Esophagus muscularis mucosa (tissue), 4 donors: ENCODE measurements at regions of chr20 and their contacts with region 1.

Region 1: DNA sequence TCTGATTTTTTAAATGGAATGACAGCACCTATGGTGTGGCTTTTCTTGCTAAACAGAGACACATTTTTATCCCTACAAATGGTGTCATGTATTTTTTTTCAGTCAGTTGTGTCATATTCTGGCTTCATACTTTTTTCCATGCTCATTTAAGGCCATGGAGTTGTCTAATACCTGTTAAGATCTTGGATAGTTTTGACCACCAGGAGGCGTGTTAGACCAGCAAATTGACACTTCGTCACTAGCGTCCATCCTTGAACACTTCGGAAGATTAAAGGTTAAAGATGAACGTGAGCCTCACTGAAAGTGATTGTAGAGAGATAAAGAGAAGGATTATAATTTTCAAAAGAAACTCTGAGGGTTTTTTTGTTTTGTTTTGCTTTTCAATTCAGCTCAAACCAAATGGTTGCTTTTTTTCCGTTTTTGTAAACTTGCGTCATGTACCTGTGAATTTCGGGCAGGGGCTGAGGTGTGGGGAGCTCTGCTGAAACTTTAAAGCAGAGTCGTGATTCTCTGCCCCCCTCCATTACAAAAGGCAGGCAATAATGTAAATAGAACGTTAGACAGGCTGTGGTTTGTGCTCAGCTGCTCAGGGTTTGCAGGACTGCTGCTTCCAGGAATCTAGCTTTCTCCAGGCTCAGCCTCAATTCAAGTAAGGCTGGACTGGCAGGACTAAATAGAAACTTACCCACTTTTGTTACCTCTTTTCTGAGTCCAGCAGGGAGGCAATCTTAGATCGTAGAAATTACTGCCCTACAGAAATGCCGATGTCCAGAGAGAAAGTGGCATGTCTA is 245.1 kb downstream of the FOXA2 start:
- DNase-seq: peak; percentile 39
- H3K4me3 ChIP-seq: no peak overlapping the region
- H3K27ac ChIP-seq: no peak overlapping the region
- H3K4me1 ChIP-seq: peaks cover 0 to 4% (median 0%) of the 10 kb centered on the region in 4 donors
- H3K27me3 ChIP-seq: peaks cover 0 to 38% (median 0%) of the 10 kb centered on the region in 4 donors
- CTCF ChIP-seq: peak; percentile 55 to 66 (median 66)
- EP300 ChIP-seq: no peak
- POLR2A ChIP-seq: no peak

Region 2: DNA sequence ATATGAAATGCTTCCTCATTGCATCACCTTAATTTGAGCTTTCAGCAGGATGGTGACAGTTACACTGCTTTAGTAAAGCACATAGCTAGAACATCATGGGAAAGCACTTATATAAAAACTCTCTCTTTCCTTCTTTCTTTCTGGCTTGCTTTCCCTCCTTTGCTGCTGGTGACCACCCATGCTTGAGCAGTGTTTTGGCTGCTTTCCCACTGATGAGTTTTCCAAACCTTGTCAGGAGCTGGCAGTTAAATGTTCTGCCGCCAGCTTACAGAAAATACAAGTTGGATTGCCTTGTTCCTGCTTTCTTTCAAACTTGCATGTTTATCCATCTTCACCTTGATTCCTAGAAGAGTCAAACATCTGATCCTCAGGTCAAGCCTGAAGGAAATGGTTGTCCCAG is 78.8 kb before region 1 on chr20:
- intact Hi-C with region 1: no loop called
- DNase-seq: no peak
- H3K4me3 ChIP-seq: no peak overlapping the region
- H3K27ac ChIP-seq: no peak overlapping the region
- H3K4me1 ChIP-seq: peaks cover 0 to 7% (median 3%) of the 10 kb centered on the region in 4 donors
- H3K27me3 ChIP-seq: no peaks in the 10 kb centered on the region
- CTCF ChIP-seq: no peak
- EP300 ChIP-seq: no peak
- POLR2A ChIP-seq: no peak

Region 3: DNA sequence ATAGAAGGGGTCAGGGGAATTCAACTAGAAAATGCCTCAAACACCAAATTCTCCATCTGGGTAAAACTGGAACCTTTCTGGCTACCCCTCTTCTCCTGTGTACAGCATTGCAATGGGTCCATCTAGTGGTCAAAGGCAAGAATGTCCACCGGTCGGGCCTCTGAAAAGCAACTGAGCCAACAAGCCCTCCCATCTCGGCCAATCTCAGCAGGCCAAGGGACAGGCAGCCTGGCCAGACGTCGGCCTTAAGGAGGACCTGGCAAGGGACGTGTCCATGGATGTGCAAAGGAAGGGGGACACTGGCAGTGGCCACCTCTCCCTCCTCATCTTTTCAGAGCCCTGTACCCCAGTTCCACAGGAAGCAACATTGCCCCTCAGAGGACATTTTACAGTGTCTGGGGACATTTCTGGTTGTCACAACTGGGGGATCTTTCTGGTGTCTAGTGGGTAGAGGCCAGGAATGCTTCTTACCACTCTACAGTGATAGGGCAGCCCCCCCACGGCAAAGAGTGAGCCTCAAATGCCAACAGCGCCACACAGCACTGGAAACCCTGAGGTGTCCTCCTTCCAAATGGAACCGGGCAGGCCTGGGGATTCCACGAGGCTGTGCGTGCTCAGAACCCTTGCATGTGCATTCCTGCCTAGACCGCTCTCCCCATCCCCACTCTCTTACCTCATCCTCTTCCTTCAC is 344.9 kb after region 1 on chr20:
- intact Hi-C with region 1: loop called (anchors 2 kb)
- DNase-seq: peak; percentile 94
- H3K4me3 ChIP-seq: no peak overlapping the region
- H3K27ac ChIP-seq: no peak overlapping the region
- H3K4me1 ChIP-seq: peaks cover 0 to 3% (median 1%) of the 10 kb centered on the region in 4 donors
- H3K27me3 ChIP-seq: peaks cover 0 to 31% (median 0%) of the 10 kb centered on the region in 4 donors
- CTCF ChIP-seq: peak; percentile 71 to 85 (median 76)
- EP300 ChIP-seq: no peak
- POLR2A ChIP-seq: no peak

Region 4: DNA sequence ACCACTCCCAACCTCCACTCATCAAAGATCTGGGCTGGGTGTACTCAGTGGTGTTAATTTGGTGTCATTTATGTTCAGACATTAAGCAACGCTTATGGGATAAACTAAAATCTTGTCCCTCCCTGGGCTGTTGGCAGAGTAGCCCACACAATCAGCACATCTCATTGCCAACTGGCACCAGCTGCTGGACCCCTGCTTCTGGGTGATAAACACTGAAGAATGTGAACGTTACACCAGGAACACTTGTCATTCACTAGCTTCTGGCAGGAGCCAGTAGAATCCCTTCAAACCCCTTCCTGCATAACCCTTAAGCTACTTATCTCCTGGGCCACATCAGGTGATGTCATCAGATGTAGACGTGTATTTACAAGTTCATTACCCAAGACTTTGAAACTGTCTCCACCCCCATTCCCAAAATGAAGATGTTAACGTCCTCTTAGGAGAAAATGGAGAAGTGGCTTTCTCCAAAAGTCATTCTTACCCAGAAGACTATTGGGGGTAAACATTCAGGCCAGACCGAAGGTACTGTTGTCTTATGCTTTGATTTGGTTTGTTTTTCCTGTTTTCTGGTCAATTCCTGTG is 854.6 kb after region 1 on chr20:
- intact Hi-C with region 1: no loop called
- DNase-seq: no peak
- H3K4me3 ChIP-seq: no peak overlapping the region
- H3K27ac ChIP-seq: no peak overlapping the region
- H3K4me1 ChIP-seq: no peaks in the 10 kb centered on the region
- H3K27me3 ChIP-seq: no peaks in the 10 kb centered on the region
- CTCF ChIP-seq: no peak
- EP300 ChIP-seq: no peak
- POLR2A ChIP-seq: no peak